Colonic mucosa (tissue), 4 donors: ENCODE measurements at regions of chr7 and their contacts with region 1.

Region 1: GRCh38 chr7:20598459-20599309 is 16.8 kb upstream of the ABCB5 start:
- DNase-seq: no peak
- H3K4me3 ChIP-seq: no peak overlapping the region
- H3K27ac ChIP-seq: no peak overlapping the region
- H3K4me1 ChIP-seq: no peaks in the 10 kb centered on the region
- H3K27me3 ChIP-seq: peaks cover 4% of the 10 kb centered on the region
- CTCF ChIP-seq: peak; percentile 70

Region 2: DNA sequence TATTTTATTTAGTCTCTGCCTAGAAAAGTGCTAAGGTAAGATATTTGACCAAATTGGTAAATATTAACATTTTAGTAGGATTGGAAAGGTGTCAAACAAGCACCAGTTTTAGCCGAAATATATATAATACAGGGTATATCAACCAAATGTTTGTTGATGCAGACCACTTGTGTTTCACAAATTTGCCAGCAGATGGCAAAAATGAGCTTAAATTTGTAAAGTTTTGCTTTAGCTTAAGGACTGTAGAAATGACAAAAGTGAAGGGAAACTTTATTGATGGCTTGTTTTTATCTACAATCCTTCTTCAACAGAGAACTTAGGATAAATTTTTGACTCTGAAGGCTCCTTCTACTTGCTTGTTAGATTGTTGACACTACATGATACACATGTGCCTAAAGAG is 885.0 kb before region 1 on chr7:
- intact Hi-C with region 1: loop called (anchors 5 kb)
- DNase-seq: no peak
- H3K4me3 ChIP-seq: no peak overlapping the region
- H3K27ac ChIP-seq: no peak overlapping the region
- H3K4me1 ChIP-seq: no peaks in the 10 kb centered on the region
- H3K27me3 ChIP-seq: no peaks in the 10 kb centered on the region
- CTCF ChIP-seq: peak; percentile 39

Region 3: DNA sequence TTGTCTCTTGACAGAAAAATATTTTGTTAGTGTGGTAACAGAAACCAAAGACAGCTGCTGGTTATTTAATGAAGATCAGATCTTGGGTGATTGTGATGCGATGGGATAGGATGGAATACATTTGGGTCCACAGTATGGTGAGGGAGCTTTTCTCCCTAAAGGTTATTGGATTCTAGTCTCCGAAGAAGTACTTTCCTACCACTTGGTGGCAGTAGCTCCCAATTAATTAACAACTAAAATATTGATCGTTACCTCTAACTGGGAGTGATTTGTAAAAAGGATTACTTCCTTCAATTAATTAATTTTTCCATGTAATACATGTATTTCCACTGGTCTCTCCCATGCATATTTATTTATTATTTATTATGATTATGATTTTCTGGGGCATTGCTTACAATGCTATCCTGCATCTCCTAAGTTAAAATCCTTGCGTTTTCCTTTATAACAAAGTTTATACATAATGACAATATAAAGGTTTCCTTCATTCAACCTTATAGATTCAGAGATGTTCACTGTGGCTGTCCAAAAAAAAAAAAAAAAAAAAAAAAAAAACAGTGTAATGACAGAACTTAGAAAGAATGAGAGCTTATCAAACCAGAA is 850.8 kb before region 1 on chr7:
- intact Hi-C with region 1: loop called (anchors 2 kb)
- DNase-seq: no peak
- H3K4me3 ChIP-seq: no peak overlapping the region
- H3K27ac ChIP-seq: no peak overlapping the region
- H3K4me1 ChIP-seq: no peaks in the 10 kb centered on the region
- H3K27me3 ChIP-seq: no peaks in the 10 kb centered on the region
- CTCF ChIP-seq: peak; percentile 20

Region 4: DNA sequence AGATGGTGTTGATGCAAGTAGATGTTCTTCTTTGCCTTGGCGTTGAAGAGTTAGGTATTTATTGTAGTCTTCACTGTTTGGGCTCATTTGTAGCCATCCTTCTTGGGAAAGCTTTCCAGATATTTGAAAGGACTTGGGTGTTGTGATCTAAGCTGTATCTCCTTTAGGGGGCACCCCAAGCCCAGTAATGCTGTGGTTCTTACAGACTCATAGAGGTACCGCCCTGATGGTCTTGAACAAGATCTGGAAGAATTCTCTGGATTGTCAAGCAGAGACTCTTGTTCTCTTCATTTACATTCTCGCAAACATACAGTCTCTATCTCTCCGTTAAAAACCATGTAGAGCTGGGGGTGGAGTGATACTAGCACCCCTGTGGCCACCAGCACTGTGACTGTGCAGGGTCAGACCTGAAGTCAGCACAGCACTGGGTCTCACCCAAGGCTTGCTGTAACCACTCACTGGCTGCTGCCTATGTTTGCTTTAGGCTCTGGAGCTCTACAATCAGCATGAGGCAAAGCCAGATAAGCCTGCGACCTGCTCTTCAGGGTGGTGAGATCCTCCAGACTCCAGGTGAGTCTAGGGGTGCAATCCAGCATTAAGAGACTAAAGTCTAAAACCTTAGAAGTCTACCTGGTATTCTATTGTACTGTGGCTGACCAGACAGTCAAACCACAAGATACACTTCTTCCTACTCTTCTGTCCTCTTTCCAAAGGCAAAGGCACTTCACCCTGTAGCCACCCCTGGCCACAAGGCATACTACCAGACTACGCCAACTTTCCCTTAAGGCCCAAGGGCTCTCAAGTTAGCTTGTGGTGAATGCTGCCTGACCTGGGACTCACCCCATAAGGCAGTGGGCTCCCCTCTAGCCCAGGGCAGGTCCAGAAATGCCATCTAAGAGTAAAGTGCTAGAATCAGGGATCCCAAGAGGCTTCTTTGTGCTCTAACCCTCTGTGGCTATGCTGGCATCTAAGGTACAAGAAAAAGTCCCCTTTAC is 615.5 kb before region 1 on chr7:
- intact Hi-C with region 1: loop called (anchors 10 kb)
- DNase-seq: peak; percentile 51
- H3K4me3 ChIP-seq: no peak overlapping the region
- H3K27ac ChIP-seq: no peak overlapping the region
- H3K4me1 ChIP-seq: no peaks in the 10 kb centered on the region
- H3K27me3 ChIP-seq: no peaks in the 10 kb centered on the region
- CTCF ChIP-seq: no peak

Region 5: DNA sequence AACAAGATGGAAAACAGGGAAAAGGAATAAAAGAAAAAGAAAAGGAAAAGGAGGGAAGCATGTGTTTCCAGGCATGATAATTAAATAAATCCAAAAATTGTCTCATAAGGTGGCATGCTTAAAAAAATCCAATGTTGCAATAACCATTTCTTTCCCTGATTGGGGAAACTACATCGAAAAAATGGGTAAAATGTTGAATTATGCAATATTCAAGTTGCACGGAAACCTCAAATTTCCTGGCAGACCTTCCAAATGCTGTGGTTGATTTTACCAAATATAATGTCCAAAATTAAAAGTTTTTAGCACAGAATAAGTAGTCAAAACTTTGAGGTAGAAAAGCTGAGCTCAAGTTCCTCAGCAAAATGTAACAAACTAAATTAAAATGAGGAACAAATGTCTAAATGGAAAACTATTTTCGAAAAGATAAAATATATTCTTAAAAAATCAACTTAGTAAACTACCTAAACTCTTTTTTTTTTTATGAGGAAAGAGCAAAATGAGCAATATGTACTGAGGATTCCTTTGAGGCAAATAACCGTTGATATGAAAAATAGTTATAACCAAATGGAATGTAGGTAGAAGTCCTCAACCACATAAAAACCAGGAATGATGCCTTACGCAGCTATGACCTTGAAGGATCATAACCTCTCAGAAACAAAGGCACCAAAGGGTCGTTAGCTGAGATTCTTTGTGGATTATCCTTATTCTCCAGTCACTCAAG is 434.1 kb before region 1 on chr7:
- intact Hi-C with region 1: loop called (anchors 10 kb)
- DNase-seq: no peak
- H3K4me3 ChIP-seq: no peak overlapping the region
- H3K27ac ChIP-seq: no peak overlapping the region
- H3K4me1 ChIP-seq: no peaks in the 10 kb centered on the region
- H3K27me3 ChIP-seq: no peaks in the 10 kb centered on the region
- CTCF ChIP-seq: no peak

Region 6: GRCh38 chr7:20310963-20311742 is 287.5 kb before region 1 on chr7:
- intact Hi-C with region 1: loop called (anchors 10 kb)
- DNase-seq: no peak
- H3K4me3 ChIP-seq: no peak overlapping the region
- H3K27ac ChIP-seq: no peak overlapping the region
- H3K4me1 ChIP-seq: peaks cover 3% of the 10 kb centered on the region
- H3K27me3 ChIP-seq: no peaks in the 10 kb centered on the region
- CTCF ChIP-seq: peak; percentile 44